CD4-positive, alpha-beta T cell (primary cell): ENCODE measurements at regions of chr2 and their contacts with region 1.

Region 1: DNA sequence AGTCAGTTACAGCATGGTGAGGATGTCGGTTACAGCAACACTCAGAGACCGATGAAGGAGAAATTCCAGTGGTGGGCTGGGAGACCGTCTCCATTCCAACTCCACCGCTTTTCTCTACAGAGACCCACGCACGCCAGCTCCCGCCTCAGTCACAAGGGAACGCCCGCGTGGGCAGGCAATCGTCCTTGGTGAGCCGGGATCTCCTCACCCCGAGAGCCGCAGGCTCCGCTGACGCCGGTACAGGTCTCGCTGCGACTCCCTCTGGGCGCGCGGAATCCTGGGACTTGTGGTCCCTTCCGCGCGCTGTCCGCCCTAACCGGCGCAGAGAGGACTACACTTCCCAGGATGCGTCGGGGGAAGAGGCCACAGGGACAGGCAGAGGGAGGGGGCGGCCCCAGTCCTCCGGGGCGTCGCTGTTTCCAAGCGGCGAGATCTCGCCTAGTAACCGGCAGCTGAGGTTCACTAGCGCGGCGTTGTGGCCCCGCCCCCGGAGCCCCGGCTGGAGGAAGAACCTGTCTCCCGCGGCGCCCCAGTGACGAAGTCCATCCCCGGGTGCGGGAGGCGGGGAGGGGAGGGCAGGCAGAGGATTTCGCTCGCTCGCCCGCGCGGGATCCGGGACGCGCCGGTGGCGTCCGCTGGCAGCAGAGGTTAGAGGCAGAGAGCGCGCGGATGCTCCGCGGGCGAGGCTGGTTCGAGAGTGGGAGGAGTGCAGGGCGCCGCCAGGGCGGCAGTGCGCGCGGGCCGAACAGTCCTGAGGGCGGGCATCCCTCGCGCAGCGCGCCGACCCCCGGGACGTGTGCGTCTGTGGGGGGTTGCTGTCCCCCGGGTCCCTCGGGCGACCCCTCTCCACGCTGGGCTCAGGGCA is at the start of gene EML6:
- DNase-seq: peak; percentile 94 to 99 (median 98)
- ATAC-seq: peak; percentile 96
- H3K4me3 ChIP-seq: peak within 1 kb of the TSS; percentile 81
- H3K4me3 Mint-ChIP-seq: peak within 1 kb of the TSS; percentile 90
- H3K27ac ChIP-seq: peak within 1 kb of the TSS in 1 of 2 donors; percentile 49
- H3K27ac Mint-ChIP-seq: peak within 1 kb of the TSS; percentile 28
- H3K4me1 ChIP-seq: peaks cover 22% of the 10 kb centered on the region
- H3K4me1 Mint-ChIP-seq: peaks cover 21% of the 10 kb centered on the region
- H3K27me3 ChIP-seq: peaks cover 16 to 17% of the 10 kb centered on the region in 2 experiments
- H3K27me3 Mint-ChIP-seq: peaks cover 66% of the 10 kb centered on the region
- CTCF ChIP-seq: no peak
- total RNA-seq, gene EML6: 0.22 to 0.34 TPM

Region 2: DNA sequence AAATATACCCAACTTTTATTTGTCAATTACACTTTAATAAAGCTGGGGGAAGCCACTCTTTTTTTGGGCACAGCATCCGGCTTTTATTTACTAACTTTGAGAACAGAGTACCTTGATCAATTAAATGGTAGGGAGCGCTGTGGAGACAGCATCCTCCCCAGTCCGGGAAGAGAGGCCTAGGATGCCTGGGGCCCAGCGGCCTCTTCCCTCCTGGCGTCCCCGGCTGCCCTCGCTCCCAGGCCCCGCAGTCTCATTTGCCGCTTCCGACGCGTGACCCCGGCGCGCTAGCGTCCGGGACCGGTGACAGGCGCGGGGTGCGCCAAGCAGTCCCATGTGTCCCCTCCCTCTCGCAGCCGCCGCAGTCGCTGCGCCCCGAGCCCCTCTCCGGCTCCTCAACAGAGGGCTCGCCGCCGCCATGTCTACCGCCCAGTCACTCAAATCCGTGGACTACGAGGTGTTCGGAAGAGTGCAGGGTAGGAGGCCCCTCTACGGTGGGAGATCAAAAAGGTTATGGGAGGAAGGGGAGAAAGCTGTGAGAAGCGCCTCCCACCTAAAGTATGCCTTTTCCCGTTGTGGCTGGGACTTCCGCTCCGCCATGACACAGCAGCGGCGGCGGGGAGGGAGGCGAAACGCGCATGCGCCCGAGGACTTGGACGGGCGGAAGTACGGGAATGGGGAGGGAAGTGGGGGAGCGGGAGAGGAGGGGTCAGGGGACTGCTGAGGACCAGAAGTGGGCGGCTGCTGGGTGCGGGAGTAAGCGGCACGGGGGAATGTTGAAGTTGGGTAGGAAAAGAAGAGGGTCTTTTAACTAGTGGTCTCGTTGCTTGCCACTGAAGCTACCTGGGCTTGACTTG is 607.9 kb before region 1 on chr2 and contains the start of gene ACYP2:
- CTCF ChIA-PET with region 1: interaction called, 3 read pairs
- POLR2A ChIA-PET with region 1: interaction called, 5 read pairs
- intact Hi-C with region 1: loop called (anchors 1 to 5 kb)
- DNase-seq: peak; percentile 79 to 96 (median 90)
- ATAC-seq: peak; percentile 78
- H3K4me3 ChIP-seq: peak within 1 kb of the TSS; percentile 86
- H3K4me3 Mint-ChIP-seq: peak within 1 kb of the TSS; percentile 92
- H3K27ac ChIP-seq: peak within 1 kb of the TSS; percentile 96 to 98
- H3K27ac Mint-ChIP-seq: peak within 1 kb of the TSS; percentile 99
- H3K4me1 ChIP-seq: peaks cover 11% of the 10 kb centered on the region
- H3K4me1 Mint-ChIP-seq: peaks cover 16% of the 10 kb centered on the region
- H3K27me3 ChIP-seq: no peaks in the 10 kb centered on the region
- H3K27me3 Mint-ChIP-seq: no peaks in the 10 kb centered on the region
- CTCF ChIP-seq: peak; percentile 17
- total RNA-seq, gene ACYP2: 9.3 to 10.9 TPM

Region 3: DNA sequence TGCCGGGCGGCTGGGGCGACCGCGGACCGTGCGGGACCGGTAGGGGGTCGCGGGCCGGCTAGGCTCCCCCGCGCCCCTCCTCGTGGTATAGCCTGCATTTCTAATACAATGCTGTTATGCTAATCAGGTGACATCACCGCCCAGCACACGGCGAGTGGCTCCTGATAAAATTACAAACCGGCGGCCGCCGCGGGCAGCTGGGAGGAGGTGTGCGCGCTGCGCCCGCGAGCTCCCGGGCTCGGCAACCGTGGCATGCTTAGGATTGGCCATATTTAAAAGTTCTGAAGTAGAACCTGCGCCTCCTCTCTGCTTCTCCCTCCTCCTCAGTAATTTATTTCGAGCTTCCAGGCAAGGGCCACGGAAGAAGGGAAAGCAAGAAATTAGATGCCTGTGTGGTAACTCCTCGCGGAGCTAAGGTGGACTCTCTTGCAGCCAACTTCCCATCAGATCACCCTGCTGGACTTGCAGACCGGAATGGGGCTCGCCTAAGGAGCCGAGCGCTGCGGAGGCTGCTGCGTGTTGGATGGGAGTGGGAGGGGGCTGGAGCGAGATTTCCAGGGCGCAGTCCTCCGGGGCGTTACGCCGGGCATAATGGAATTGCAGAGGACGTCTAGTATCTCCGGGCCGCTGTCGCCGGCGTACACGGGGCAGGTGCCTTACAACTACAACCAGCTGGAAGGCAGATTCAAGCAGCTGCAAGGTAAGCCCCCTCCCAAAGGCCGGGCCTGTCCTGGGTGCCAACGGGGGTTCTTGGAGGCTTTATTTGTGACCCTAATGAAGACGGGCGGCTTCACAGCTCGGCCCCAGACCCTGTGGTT is 165.0 kb before region 1 on chr2:
- CTCF ChIA-PET with region 1: no interaction called
- POLR2A ChIA-PET with region 1: interaction called, 8 read pairs
- intact Hi-C with region 1: loop called in 1 of 2 experiments (anchors 5 kb)
- DNase-seq: peak; percentile 35 to 88 (median 62)
- ATAC-seq: peak; percentile 66
- H3K4me3 ChIP-seq: peak overlapping the region; percentile 72
- H3K4me3 Mint-ChIP-seq: peak overlapping the region; percentile 98
- H3K27ac ChIP-seq: peak overlapping the region; percentile 75 to 89
- H3K27ac Mint-ChIP-seq: peak overlapping the region; percentile 95
- H3K4me1 ChIP-seq: peaks cover 30% of the 10 kb centered on the region
- H3K4me1 Mint-ChIP-seq: peaks cover 72% of the 10 kb centered on the region
- H3K27me3 ChIP-seq: no peaks in the 10 kb centered on the region
- H3K27me3 Mint-ChIP-seq: no peaks in the 10 kb centered on the region
- CTCF ChIP-seq: no peak

Region 4: DNA sequence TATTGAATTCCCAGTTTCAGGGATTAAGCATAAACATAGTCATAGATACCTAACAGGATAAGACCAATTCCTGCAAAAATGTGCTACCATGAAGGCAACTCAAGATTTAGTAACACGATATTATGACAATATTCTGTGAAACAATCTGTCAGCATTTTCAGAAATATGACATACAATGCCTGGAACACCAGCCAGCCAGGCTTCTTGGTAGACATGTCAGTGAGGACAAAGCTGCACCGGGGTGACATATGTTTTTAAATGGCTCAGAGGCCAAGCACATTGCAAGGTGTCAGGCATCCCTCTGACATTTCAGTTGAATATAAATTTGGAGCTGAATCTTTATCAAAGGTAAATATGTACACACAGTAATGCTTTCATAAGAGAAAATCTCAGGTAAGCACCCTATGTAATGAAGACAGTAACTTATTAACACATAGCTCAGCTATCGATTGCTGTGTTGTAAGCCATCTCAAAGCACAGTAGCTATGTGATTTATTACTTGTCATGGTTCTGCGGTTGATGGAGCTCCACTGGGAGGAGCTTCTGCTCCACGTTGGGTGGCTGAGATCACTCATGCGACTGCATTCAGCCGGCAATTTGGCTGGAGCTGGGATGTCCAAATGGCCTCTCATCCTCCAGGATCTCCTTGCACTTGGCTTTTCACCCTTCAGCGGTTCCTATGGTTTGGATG is 31.8 kb before region 1 on chr2:
- CTCF ChIA-PET with region 1: no interaction called
- POLR2A ChIA-PET with region 1: no interaction called
- intact Hi-C with region 1: no loop called
- DNase-seq: no peak
- ATAC-seq: no peak
- H3K4me3 ChIP-seq: no peak overlapping the region
- H3K4me3 Mint-ChIP-seq: no peak overlapping the region
- H3K27ac ChIP-seq: no peak overlapping the region
- H3K27ac Mint-ChIP-seq: no peak overlapping the region
- H3K4me1 ChIP-seq: no peaks in the 10 kb centered on the region
- H3K4me1 Mint-ChIP-seq: no peaks in the 10 kb centered on the region
- H3K27me3 ChIP-seq: no peaks in the 10 kb centered on the region
- H3K27me3 Mint-ChIP-seq: peaks cover 7% of the 10 kb centered on the region
- CTCF ChIP-seq: no peak

Region 5: GRCh38 chr2:55050133-55050994 is 327.0 kb after region 1 on chr2 and contains the start of gene RTN4:
- CTCF ChIA-PET with region 1: interaction called, 3 read pairs
- POLR2A ChIA-PET with region 1: interaction called, 3 read pairs
- intact Hi-C with region 1: loop called in 1 of 2 experiments (anchors 5 kb)
- DNase-seq: peak; percentile 94 to 99 (median 98)
- ATAC-seq: peak; percentile 89
- H3K4me3 ChIP-seq: peak within 1 kb of the TSS; percentile 90
- H3K4me3 Mint-ChIP-seq: peak within 1 kb of the TSS; percentile 99
- H3K27ac ChIP-seq: peak within 1 kb of the TSS; percentile 83 to 90
- H3K27ac Mint-ChIP-seq: peak within 1 kb of the TSS; percentile 97
- H3K4me1 ChIP-seq: peaks cover 30% of the 10 kb centered on the region
- H3K4me1 Mint-ChIP-seq: peaks cover 81% of the 10 kb centered on the region
- H3K27me3 ChIP-seq: no peaks in the 10 kb centered on the region
- H3K27me3 Mint-ChIP-seq: no peaks in the 10 kb centered on the region
- CTCF ChIP-seq: no peak
- total RNA-seq, gene RTN4: 84.9 to 85.7 TPM

Region 6: GRCh38 chr2:55419679-55420438 is 696.5 kb after region 1 on chr2 and contains the start of gene CCDC88A:
- CTCF ChIA-PET with region 1: no interaction called
- POLR2A ChIA-PET with region 1: no interaction called
- intact Hi-C with region 1: loop called in 1 of 2 experiments (anchors 5 kb)
- DNase-seq: peak; percentile 76 to 96 (median 84)
- ATAC-seq: peak; percentile 76
- H3K4me3 ChIP-seq: peak within 1 kb of the TSS; percentile 94
- H3K4me3 Mint-ChIP-seq: peak within 1 kb of the TSS; percentile 95
- H3K27ac ChIP-seq: peak within 1 kb of the TSS; percentile 56 to 81
- H3K27ac Mint-ChIP-seq: peak within 1 kb of the TSS; percentile 79
- H3K4me1 ChIP-seq: peaks cover 12% of the 10 kb centered on the region
- H3K4me1 Mint-ChIP-seq: peaks cover 44% of the 10 kb centered on the region
- H3K27me3 ChIP-seq: no peaks in the 10 kb centered on the region
- H3K27me3 Mint-ChIP-seq: no peaks in the 10 kb centered on the region
- CTCF ChIP-seq: no peak
- total RNA-seq, gene CCDC88A: 11.0 to 12.9 TPM

Region 7: GRCh38 chr2:55693181-55694134 is 970.1 kb after region 1 on chr2 and contains the start of gene PNPT1:
- CTCF ChIA-PET with region 1: no interaction called
- POLR2A ChIA-PET with region 1: no interaction called
- intact Hi-C with region 1: loop called in 1 of 2 experiments (anchors 5 kb)
- DNase-seq: peak; percentile 85 to 96 (median 90)
- ATAC-seq: peak; percentile 100
- H3K4me3 ChIP-seq: peak within 1 kb of the TSS; percentile 94
- H3K4me3 Mint-ChIP-seq: peak within 1 kb of the TSS; percentile 94
- H3K27ac ChIP-seq: peak within 1 kb of the TSS; percentile 31 to 37
- H3K27ac Mint-ChIP-seq: peak within 1 kb of the TSS; percentile 92
- H3K4me1 ChIP-seq: peaks cover 10% of the 10 kb centered on the region
- H3K4me1 Mint-ChIP-seq: peaks cover 44% of the 10 kb centered on the region
- H3K27me3 ChIP-seq: no peaks in the 10 kb centered on the region
- H3K27me3 Mint-ChIP-seq: no peaks in the 10 kb centered on the region
- CTCF ChIP-seq: no peak
- total RNA-seq, gene PNPT1: 10.2 to 10.3 TPM